Lower leg skin (tissue), 4 donors: ENCODE measurements at regions of chr1 and their contacts with region 1.

Region 1: DNA sequence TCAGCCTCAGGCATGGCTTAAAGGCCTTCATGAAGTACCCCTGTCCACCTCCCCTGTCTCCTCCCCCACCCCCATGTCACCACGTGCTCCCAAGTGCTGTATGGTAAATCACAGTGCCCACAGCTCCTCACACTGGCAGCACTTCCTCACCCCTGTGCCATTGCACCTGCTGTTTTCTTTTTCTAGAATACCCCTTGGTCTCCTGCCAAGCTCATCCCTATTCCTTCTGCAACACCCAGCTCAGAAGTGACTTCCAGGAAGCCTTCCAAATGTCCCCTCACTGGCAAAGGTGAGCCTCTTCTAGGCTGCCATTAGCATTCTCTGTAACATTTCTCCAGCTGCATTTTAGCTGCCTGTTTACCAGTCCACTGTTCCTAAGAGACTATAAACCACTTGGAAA is 9.4 kb downstream of the AKNAD1 start:
- DNase-seq: no peak
- H3K4me3 ChIP-seq: no peak overlapping the region
- CTCF ChIP-seq: no peak
- POLR2A ChIP-seq: no peak

Region 2: DNA sequence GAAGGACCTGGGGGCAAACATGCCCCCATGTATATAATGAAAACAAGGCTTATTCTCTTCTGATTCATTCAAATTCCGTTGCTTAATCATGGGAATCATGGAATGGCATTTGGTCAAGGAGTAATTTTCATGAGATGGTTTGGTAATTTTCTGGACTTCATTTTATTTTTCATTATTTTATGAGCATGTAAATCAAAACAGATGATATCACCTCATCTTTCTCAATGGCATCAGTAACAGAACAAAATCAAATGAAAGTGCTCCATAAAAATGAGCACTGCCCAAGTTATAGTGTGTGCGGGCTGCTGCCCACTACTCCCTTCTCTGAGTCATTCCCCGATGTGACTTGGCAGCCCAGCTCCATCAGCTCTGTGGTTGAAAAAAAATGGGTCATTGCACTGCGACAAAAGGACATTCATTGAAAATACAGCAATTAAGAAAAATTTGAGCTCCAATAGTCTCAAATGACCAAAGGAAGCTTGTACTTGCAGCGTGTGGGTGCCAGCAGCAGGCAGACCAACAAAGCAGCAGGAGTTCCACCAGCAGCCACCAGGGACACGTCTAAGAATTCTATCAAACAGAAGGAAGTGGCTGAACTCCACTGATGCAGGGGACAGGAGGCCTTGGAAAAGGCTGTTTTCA is 798.2 kb before region 1 on chr1:
- intact Hi-C with region 1: loop called (anchors 10 kb)
- DNase-seq: peak in 1 of 2 donors; percentile 91
- H3K4me3 ChIP-seq: no peak overlapping the region
- CTCF ChIP-seq: no peak
- POLR2A ChIP-seq: no peak